Activated CD8-positive, alpha-beta T cell treated with anti-CD3 and anti-CD28 coated beads for 36 hours (primary cell): ENCODE measurements at regions of chr3 and their contacts with region 1.

Region 1: GRCh38 chr3:107938143-107938542 is 152.7 kb downstream of the CD47 start:
- DNase-seq: peak; percentile 18
- ATAC-seq: no peak
- H3K4me3 Mint-ChIP-seq: no peak overlapping the region
- H3K27ac Mint-ChIP-seq: no peak overlapping the region
- H3K4me1 Mint-ChIP-seq: peaks cover 22% of the 10 kb centered on the region
- H3K27me3 Mint-ChIP-seq: peaks cover 2% of the 10 kb centered on the region
- CTCF ChIP-seq: peak; percentile 26

Region 2: GRCh38 chr3:107910713-107911259 is 27.4 kb before region 1 on chr3:
- CTCF ChIA-PET with region 1: no interaction called
- POLR2A ChIA-PET with region 1: no interaction called
- intact Hi-C with region 1: no loop called
- DNase-seq: peak; percentile 70
- ATAC-seq: peak; percentile 91
- H3K4me3 Mint-ChIP-seq: no peak overlapping the region
- H3K27ac Mint-ChIP-seq: no peak overlapping the region
- H3K4me1 Mint-ChIP-seq: peaks cover 16% of the 10 kb centered on the region
- H3K27me3 Mint-ChIP-seq: peaks cover 3% of the 10 kb centered on the region
- CTCF ChIP-seq: no peak

Region 3: GRCh38 chr3:107987036-107987947 is 49.1 kb after region 1 on chr3:
- CTCF ChIA-PET with region 1: no interaction called
- POLR2A ChIA-PET with region 1: no interaction called
- intact Hi-C with region 1: loop called (anchors 5 kb)
- DNase-seq: no peak
- ATAC-seq: no peak
- H3K4me3 Mint-ChIP-seq: no peak overlapping the region
- H3K27ac Mint-ChIP-seq: no peak overlapping the region
- H3K4me1 Mint-ChIP-seq: peaks cover 23% of the 10 kb centered on the region
- H3K27me3 Mint-ChIP-seq: no peaks in the 10 kb centered on the region
- CTCF ChIP-seq: no peak